Keratinocyte (primary cell): ENCODE measurements at regions of chr7 and their contacts with region 1.

Region 1: GRCh38 chr7:100942045-100942768 is 7.1 kb upstream of the MUC3A start:
- DNase-seq: no peak
- H3K4me3 ChIP-seq: no peak overlapping the region
- H3K27ac ChIP-seq: no peak overlapping the region
- H3K4me1 ChIP-seq: no peaks in the 10 kb centered on the region
- H3K27me3 ChIP-seq: no peaks in the 10 kb centered on the region
- CTCF ChIP-seq: no peak

Region 2: GRCh38 chr7:100719523-100720319 is 222.5 kb before region 1 on chr7:
- dilution Hi-C with region 1: no loop called
- DNase-seq: no peak
- H3K4me3 ChIP-seq: peak overlapping the region in 2 of 3 experiments; percentile 40 to 43
- H3K27ac ChIP-seq: no peak overlapping the region
- H3K4me1 ChIP-seq: peaks cover 4% of the 10 kb centered on the region
- H3K27me3 ChIP-seq: peaks cover 17% of the 10 kb centered on the region
- CTCF ChIP-seq: peak; percentile 62 to 75 (median 69)

Region 3: GRCh38 chr7:100837099-100837836 is 104.9 kb before region 1 on chr7:
- dilution Hi-C with region 1: no loop called
- DNase-seq: no peak
- H3K4me3 ChIP-seq: peak overlapping the region in 2 of 3 experiments; percentile 44 to 57
- H3K27ac ChIP-seq: peak overlapping the region; percentile 69
- H3K4me1 ChIP-seq: peaks cover 17% of the 10 kb centered on the region
- H3K27me3 ChIP-seq: no peaks in the 10 kb centered on the region
- CTCF ChIP-seq: no peak

Region 4: GRCh38 chr7:100889761-100890634 is 52.2 kb before region 1 on chr7:
- dilution Hi-C with region 1: loop called (anchors 10 kb)
- DNase-seq: peak; percentile 71
- H3K4me3 ChIP-seq: peak overlapping the region; percentile 45 to 65 (median 64)
- H3K27ac ChIP-seq: peak overlapping the region; percentile 71
- H3K4me1 ChIP-seq: peaks cover 35% of the 10 kb centered on the region
- H3K27me3 ChIP-seq: peaks cover 13% of the 10 kb centered on the region
- CTCF ChIP-seq: no peak

Region 5: DNA sequence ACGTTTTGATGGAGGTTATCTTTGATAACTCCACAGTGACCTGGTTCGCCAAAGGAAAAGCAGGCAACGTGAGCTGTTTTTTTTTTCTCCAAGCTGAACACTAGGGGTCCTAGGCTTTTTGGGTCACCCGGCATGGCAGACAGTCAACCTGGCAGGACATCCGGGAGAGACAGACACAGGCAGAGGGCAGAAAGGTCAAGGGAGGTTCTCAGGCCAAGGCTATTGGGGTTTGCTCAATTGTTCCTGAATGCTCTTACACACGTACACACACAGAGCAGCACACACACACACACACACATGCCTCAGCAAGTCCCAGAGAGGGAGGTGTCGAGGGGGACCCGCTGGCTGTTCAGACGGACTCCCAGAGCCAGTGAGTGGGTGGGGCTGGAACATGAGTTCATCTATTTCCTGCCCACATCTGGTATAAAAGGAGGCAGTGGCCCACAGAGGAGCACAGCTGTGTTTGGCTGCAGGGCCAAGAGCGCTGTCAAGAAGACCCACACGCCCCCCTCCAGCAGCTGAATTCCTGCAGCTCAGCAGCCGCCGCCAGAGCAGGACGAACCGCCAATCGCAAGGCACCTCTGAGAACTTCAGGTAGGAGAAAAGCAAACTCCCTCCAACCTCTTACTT is 184.6 kb after region 1 on chr7 and contains the start of gene SERPINE1:
- dilution Hi-C with region 1: no loop called
- DNase-seq: peak; percentile 99
- H3K4me3 ChIP-seq: peak within 1 kb of the TSS; percentile 45 to 86 (median 78)
- H3K27ac ChIP-seq: peak within 1 kb of the TSS; percentile 88
- H3K4me1 ChIP-seq: peaks cover 44% of the 10 kb centered on the region
- H3K27me3 ChIP-seq: no peaks in the 10 kb centered on the region
- CTCF ChIP-seq: peak in 1 of 3 experiments; percentile 22
- polyA plus RNA-seq, gene SERPINE1: 522 to 820 TPM (median 808 TPM) in 3 replicates